PC-3 (cell line): ENCODE measurements at regions of chr16 and their contacts with region 1.

Region 1: GRCh38 chr16:30437486-30438046 is 7.7 kb upstream of the DCTPP1 start:
- DNase-seq: peak; percentile 56
- ATAC-seq: peak; percentile 84
- H3K4me3 ChIP-seq: no peak overlapping the region
- H3K27ac ChIP-seq: 0 out of 2 replicates have a peak overlapping the region, but pooled peaks have one; percentile 22
- H3K4me1 ChIP-seq: peaks cover 3% of the 10 kb centered on the region; the same call in 1 of the 2 replicates
- H3K27me3 ChIP-seq: no peaks in the 10 kb centered on the region
- CTCF ChIP-seq: no peak

Region 2: DNA sequence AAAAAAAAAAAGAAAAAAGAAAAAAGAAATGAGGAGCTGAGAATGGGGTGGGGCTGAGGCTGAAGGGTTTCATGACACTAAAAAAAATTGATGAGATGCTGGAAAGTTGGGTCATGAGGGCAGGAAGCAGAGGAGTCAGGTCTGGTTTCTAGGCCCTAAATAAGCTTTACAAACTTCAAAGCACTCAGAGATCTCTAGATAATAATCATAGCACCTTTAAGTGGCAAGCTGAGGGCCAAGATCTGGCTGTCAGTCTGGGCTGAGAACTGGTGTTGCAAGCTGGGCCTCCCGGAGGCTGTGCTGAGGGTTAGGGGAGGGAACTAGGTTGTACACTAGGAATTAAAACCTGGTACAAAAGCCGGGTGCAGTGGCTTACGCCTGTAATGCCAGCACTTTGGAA is 114.2 kb after region 1 on chr16:
- CTCF ChIA-PET with region 1: no interaction called
- POLR2A ChIA-PET with region 1: interaction called, 11 read pairs
- intact Hi-C with region 1: no loop called
- DNase-seq: no peak
- ATAC-seq: no peak
- H3K4me3 ChIP-seq: no peak overlapping the region
- H3K27ac ChIP-seq: no peak overlapping the region
- H3K4me1 ChIP-seq: peaks cover 3% of the 10 kb centered on the region; the same call in 1 of the 2 replicates
- H3K27me3 ChIP-seq: no peaks in the 10 kb centered on the region
- CTCF ChIP-seq: no peak